ENCODE measurements at regions of chr1 and their contacts with region 1.

Region 1: DNA sequence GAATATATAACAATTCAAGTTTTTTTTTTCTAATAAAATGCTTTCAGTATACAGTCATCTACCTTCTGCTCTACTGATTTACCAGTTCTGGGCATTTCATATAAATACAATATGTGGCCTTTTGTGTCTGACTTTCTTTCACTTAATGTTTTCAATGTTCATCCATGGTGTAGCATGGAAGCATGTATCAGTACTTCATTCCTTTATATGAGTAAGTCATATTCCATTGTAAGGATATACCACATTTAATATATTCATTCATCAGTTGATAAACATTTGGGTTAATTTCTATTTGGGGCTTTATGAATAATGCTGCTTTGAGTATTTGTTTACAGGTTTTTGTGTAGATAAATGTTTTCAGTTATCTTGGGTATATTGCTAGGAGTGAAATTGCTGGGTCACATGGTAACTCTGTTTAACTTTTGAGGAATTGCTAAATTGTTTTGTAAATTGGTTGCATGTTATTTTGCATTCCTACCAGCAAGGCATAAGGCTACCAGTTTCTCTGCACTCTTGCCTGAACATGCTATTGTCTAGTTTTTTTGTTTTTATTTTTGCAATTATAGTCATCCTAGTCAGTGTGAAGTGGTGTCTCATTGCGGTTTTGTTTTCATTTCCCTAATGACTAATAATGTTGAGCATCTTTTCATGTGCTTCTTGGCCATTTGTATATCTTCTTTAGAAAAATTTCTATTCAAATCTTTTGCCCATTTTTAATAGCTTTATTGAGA is 206.1 kb downstream of the TM2D1 start:
- DNase-seq: no peak
- H3K4me3 ChIP-seq: no peak overlapping the region
- H3K27ac ChIP-seq: no peak overlapping the region
- H3K4me1 ChIP-seq: no peaks in the 10 kb centered on the region
- H3K27me3 ChIP-seq: no peaks in the 10 kb centered on the region
- CTCF ChIP-seq: no peak
- EP300 ChIP-seq: no peak
- POLR2A ChIP-seq: no peak

Region 2: DNA sequence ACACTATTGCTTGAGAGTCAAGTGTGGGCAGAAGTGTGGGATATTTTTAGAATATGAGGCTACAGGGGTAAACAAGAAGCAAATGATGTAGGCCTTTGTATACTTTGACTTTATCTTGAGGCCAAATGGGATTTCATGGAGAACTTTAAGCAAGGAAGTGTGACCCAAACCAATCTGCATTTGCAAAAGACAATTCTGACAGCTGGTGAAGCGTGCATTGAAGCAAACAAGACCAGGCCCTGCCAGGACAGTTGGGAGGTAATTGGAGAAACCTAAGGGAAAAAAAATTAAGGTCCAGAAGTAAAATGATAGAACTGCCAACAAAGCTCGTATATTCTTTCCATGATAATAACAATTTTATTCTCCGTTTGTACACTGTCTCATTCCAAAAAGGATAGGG is 37.8 kb after region 1 on chr1:
- in situ Hi-C with region 1: no loop called
- intact Hi-C with region 1: loop called (anchors 1 kb)
- DNase-seq: no peak
- H3K4me3 ChIP-seq: no peak overlapping the region
- H3K27ac ChIP-seq: no peak overlapping the region
- H3K4me1 ChIP-seq: no peaks in the 10 kb centered on the region
- H3K27me3 ChIP-seq: no peaks in the 10 kb centered on the region
- CTCF ChIP-seq: no peak
- EP300 ChIP-seq: no peak
- POLR2A ChIP-seq: no peak